ENCODE measurements at regions of chr20 and their contacts with region 1.

Region 1: GRCh38 chr20:25057234-25058050 is 497 bp downstream of the ACSS1 start:
- DNase-seq: peak; percentile 83
- H3K4me3 Mint-ChIP-seq: peak overlapping the region; percentile 78
- H3K27ac Mint-ChIP-seq: peak overlapping the region; percentile 84
- H3K4me1 Mint-ChIP-seq: peaks cover 33% of the 10 kb centered on the region
- H3K27me3 Mint-ChIP-seq: peaks cover 47% of the 10 kb centered on the region

Region 2: GRCh38 chr20:23874747-23875146 is 1182.7 kb before region 1 on chr20:
- intact Hi-C with region 1: no loop called
- DNase-seq: no peak
- H3K4me3 Mint-ChIP-seq: no peak overlapping the region
- H3K27ac Mint-ChIP-seq: no peak overlapping the region
- H3K4me1 Mint-ChIP-seq: no peaks in the 10 kb centered on the region
- H3K27me3 Mint-ChIP-seq: peaks cover 4% of the 10 kb centered on the region

Region 3: GRCh38 chr20:24672886-24673677 is 384.4 kb before region 1 on chr20:
- intact Hi-C with region 1: no loop called
- DNase-seq: no peak
- H3K4me3 Mint-ChIP-seq: no peak overlapping the region
- H3K27ac Mint-ChIP-seq: no peak overlapping the region
- H3K4me1 Mint-ChIP-seq: no peaks in the 10 kb centered on the region
- H3K27me3 Mint-ChIP-seq: no peaks in the 10 kb centered on the region

Region 4: DNA sequence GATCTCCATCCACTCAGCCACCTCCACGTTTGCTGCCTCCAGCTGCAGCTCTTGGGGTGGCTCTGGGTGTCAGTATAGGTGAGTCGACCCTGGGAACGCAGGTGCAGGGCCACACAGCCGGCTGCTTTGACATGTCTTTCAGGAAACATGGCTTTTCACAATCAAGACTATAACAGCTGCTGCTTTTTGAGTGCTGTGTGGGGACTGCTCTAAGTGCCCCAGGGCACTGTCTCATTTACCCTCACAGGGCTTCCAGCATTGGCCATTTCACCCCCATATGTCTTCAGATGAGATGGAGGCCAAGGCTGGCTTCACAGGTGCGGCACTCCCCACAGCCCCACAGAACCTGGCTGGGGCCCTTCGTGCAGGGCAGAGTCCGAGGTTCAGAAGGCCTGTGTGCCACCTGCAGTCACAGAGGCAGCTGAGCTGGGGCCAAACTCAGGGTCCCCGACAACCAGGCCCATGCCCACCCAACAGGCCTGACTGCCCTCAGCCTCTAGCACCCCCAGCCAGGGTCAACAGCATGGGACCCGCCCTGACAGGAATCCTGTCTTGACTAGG is 123.3 kb before region 1 on chr20:
- intact Hi-C with region 1: loop called (anchors 5 kb)
- DNase-seq: no peak
- H3K4me3 Mint-ChIP-seq: no peak overlapping the region
- H3K27ac Mint-ChIP-seq: no peak overlapping the region
- H3K4me1 Mint-ChIP-seq: peaks cover 46% of the 10 kb centered on the region
- H3K27me3 Mint-ChIP-seq: no peaks in the 10 kb centered on the region

Region 5: DNA sequence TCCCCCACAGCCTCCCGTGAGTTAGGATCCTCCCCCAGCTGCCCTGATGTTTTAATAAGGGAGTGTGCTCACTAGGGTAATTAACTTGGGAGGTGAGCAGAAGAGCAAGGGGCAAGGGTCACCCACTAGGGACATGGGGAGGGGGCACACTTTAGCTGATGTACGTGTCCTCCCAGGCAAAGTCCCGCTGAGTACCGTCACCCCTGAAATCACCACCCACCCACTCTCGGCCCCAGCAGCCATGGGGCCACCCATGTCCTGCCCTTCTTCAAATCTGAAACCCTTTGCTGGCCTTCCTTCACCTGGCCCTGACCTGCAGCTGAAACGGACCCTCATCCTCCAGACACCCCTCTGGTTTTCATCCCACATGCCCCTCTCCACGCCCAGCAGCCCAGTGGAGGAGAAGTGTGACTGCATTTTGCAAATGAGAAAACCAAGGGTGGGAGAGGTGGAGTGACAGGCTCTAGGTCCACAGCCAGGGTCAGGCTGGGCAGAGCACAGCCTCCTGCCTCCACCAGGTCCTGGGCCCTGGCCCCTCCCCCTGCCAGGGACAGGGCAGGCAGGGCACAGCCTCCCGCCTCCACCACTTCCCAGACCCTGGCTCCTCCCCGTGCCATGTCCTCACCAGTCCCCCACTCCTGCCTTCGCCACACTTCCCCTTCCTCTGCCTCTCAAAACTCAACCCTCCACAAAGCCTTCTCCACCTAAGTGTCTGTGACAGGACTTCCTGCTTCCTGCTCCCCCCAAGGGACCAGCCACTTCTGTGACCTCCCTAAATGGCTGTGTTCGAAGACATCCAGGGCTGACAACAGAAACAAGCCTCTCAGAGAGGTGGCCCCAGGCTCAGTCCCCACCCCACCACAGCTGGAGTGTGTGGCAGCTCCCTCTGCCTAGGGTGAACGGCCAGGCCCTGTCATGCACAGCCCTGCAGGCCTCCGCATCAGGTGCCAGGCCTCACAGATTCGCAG is 14.6 kb before region 1 on chr20:
- intact Hi-C with region 1: no loop called
- DNase-seq: peak; percentile 6
- H3K4me3 Mint-ChIP-seq: no peak overlapping the region
- H3K27ac Mint-ChIP-seq: no peak overlapping the region
- H3K4me1 Mint-ChIP-seq: peaks cover 14% of the 10 kb centered on the region
- H3K27me3 Mint-ChIP-seq: no peaks in the 10 kb centered on the region

Region 6: DNA sequence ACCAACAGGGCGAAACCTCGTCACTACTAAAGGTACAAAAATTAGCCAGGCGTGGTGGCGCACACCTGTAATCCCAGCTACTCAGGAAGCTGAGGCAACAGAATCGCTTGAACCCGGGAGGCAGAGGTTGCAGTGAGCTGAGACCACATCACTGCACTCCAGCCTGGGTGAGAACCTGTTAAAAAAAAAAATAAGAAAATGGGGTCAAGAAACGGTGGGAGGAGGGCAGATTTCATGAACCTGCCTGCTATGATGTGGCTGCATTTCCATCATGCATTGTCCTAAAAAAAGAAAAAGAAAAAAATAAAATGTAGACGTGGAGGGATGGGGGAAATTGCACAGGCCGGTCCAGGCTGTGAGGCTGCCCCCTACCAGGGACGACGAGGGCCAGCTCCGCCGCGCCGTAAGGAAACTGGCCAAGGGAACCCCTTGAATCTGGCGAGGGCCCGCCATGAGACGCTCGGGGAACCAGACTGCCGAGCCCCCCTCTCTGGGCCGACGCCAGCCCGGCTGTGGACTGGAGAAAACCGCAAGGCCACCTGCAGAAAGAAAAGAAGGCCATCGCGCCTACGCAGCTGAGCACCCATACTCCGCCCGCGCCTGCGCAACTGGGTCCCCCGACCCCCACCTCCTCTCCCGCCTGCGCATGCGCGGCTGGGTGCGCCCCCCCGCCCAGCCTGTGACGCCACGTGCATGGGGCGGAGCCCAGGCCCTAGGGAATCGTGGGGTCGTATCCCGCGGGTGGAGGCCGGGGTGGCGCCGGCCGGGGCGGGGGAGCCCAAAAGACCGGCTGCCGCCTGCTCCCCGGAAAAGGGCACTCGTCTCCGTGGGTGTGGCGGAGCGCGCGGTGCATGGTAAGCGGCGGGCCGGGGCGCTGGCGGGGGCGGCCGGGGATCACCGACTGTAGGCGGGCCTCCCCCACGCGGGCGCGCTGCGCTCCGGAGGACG is 137.8 kb after region 1 on chr20 and contains the start of gene ENTPD6:
- intact Hi-C with region 1: loop called (anchors 1 kb)
- DNase-seq: peak; percentile 89
- H3K4me3 Mint-ChIP-seq: peak within 1 kb of the TSS; percentile 91
- H3K27ac Mint-ChIP-seq: peak within 1 kb of the TSS; percentile 81
- H3K4me1 Mint-ChIP-seq: peaks cover 20% of the 10 kb centered on the region
- H3K27me3 Mint-ChIP-seq: no peaks in the 10 kb centered on the region
- total RNA-seq, gene ENTPD6: 42.5 and 43.5 TPM in 2 replicates

Region 7: DNA sequence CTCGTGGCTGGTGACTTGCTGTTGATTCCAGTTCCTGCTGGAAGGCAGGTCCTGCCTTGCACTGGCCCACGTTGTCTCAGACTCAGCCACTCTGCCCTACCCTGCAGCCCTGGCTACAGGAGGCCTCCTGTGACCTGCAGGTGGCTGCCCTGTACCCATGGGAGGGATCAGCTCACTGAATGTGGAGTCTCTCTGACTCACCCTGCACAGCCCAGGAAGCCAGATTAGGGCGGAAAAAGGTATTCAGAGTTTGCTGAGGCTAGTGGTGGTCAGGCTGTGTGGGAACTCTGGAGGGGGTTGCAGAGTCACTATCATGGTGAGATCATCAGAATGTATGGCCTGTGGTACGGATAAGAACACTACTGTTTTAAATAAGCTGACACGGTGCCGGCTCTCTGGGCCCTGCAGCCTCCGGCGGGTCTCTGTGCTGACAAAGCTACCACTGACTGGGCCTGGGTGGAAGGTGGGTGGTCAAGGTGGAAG is 165.8 kb after region 1 on chr20:
- intact Hi-C with region 1: no loop called
- DNase-seq: no peak
- H3K4me3 Mint-ChIP-seq: no peak overlapping the region
- H3K27ac Mint-ChIP-seq: peak overlapping the region; percentile 26
- H3K4me1 Mint-ChIP-seq: peaks cover 6% of the 10 kb centered on the region
- H3K27me3 Mint-ChIP-seq: no peaks in the 10 kb centered on the region

Region 8: GRCh38 chr20:25310268-25310920 is 253.0 kb after region 1 on chr20:
- intact Hi-C with region 1: loop called (anchors 5 kb)
- DNase-seq: peak; percentile 61
- H3K4me3 Mint-ChIP-seq: peak overlapping the region; percentile 81
- H3K27ac Mint-ChIP-seq: peak overlapping the region; percentile 98
- H3K4me1 Mint-ChIP-seq: peaks cover 46% of the 10 kb centered on the region
- H3K27me3 Mint-ChIP-seq: no peaks in the 10 kb centered on the region

Region 9: DNA sequence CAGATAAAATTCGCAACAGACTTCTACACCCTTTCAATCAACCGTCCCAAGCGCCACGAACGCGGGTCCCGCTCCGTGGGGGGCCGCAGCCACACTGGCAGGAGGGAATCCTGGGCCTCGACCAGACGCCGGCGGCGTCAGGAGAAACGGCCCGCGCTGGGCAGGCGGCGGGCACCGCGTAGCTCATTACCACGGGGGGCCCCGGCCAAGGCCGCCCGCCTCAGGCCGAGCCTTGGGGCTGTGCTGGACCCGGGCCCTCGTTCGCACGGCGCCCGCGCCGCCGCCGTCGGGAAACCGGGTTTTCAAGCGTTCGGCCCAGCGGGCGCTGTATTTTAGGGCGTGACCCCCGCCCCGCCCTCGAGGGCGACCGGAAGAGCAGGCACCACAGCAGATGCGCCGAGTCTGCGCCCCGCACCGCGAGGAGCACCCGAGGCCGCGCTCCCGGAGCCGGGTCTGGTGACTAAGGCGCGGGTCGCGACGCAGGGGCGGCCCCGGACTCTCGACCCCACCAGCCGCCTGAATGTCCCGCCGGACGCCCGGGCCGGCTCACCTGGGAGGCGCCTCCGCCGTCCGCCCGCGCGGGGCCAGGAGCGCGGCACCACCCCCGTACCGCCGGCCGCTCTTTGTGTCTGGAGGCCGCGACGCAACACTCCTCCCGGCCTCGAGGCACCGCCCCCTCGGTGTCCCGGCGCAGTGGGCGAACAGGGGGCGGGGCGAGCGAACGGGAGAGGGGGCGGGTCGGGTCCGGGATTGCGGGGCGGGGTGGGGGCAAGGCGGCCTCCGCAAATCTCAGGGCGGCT is 527.7 kb after region 1 on chr20 and contains the start of gene NINL:
- intact Hi-C with region 1: loop called (anchors 2 kb)
- DNase-seq: peak; percentile 50
- H3K4me3 Mint-ChIP-seq: peak within 1 kb of the TSS; percentile 84
- H3K27ac Mint-ChIP-seq: peak within 1 kb of the TSS; percentile 64
- H3K4me1 Mint-ChIP-seq: peaks cover 12% of the 10 kb centered on the region
- H3K27me3 Mint-ChIP-seq: peaks cover 8% of the 10 kb centered on the region
- total RNA-seq, gene NINL: 2.0 and 2.5 TPM in 2 replicates